Psoas muscle (tissue), 8 donors: ENCODE measurements at regions of chr11 and their contacts with region 1.

Region 1: DNA sequence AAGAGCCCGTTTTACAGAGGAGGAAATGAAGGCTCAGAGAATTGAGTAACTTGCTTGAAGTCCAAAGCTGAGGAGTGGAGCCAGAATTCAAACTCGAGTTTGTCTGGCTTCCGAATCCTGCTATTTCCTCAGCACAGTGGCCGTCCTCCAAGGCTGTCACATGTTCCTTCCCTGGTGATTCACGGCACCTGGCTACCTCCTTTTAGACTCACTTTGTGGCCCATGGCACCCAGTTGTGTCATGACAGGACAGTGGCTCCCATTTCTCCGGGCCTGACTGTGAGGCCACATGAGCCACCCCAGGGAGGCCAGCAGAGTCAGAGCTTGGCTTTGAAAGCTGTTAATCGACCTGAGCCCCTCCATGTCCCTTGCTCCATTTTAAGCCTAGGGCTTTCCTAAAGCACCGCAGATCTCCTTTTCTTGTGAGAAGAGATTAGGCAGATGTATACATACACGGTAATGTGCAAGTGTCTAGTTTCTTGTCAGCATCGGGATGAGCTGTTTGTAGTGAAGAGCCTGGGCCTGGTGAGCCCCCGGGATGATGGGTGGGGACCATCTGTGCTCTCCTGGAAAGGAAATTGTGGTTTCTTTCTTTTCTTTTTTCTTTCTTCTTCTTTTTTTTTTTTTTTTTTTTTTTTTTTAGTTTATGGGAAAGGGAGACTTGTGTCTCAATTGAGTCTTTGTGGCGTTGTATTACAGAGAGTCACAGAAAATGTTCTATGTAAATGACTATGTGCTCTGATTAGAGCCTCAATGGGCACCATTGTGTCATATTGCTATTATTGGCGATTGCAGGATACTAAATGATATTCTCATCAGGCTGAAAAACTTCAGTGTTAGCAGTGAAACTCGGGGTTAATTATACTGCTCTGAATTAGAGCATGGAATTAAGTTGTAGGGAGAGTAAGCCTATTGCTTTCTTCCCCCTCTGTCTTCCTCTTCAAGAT is 54.8 kb downstream of the PTPRJ start:
- DNase-seq: peak; percentile 87 to 92
- ATAC-seq: peak; percentile 87 to 92 (median 92)
- H3K4me3 ChIP-seq: no peak overlapping the region
- H3K27ac ChIP-seq: peak overlapping the region; percentile 89
- H3K4me1 ChIP-seq: peaks cover 40% of the 10 kb centered on the region
- H3K27me3 ChIP-seq: no peaks in the 10 kb centered on the region
- CTCF ChIP-seq: no peak

Region 2: GRCh38 chr11:47967577-47968425 is 67.4 kb before region 1 on chr11:
- intact Hi-C with region 1: no loop called
- DNase-seq: no peak
- ATAC-seq: no peak
- H3K4me3 ChIP-seq: no peak overlapping the region
- H3K27ac ChIP-seq: no peak overlapping the region
- H3K4me1 ChIP-seq: no peaks in the 10 kb centered on the region
- H3K27me3 ChIP-seq: no peaks in the 10 kb centered on the region
- CTCF ChIP-seq: no peak

Region 3: DNA sequence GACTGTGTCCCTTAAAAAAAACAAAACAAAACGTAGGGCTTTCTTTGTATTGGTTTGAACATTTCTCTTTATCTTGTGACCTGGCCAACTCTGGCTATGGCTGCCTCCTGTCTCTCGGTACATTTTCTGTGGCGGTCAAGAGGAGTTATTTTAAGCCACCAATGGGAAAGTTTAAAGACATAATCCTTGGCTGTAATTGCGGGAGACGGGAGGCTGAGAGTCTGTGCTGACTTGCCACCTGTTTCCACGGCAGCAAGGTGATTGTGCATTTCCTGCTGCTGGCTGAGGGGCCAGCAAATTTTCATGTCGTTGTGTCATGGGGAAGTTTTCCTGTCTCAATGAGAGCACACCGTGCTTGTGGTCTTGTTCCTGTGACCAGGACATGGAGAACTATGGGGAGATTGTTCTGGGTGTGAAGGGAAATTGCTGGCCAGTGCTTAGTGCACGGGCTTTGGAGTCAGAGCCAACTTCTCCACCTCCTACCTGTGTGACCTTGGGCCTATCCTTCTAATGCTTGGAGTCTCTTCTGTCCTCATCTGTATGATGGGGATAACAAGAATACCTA is 43.9 kb before region 1 on chr11:
- intact Hi-C with region 1: loop called in 1 of 2 experiments (anchors 5 kb)
- DNase-seq: peak; percentile 28 to 69
- ATAC-seq: peak; percentile 80 to 89 (median 86)
- H3K4me3 ChIP-seq: peak overlapping the region; percentile 42
- H3K27ac ChIP-seq: peak overlapping the region; percentile 78
- H3K4me1 ChIP-seq: peaks cover 13% of the 10 kb centered on the region
- H3K27me3 ChIP-seq: no peaks in the 10 kb centered on the region
- CTCF ChIP-seq: no peak

Region 4: DNA sequence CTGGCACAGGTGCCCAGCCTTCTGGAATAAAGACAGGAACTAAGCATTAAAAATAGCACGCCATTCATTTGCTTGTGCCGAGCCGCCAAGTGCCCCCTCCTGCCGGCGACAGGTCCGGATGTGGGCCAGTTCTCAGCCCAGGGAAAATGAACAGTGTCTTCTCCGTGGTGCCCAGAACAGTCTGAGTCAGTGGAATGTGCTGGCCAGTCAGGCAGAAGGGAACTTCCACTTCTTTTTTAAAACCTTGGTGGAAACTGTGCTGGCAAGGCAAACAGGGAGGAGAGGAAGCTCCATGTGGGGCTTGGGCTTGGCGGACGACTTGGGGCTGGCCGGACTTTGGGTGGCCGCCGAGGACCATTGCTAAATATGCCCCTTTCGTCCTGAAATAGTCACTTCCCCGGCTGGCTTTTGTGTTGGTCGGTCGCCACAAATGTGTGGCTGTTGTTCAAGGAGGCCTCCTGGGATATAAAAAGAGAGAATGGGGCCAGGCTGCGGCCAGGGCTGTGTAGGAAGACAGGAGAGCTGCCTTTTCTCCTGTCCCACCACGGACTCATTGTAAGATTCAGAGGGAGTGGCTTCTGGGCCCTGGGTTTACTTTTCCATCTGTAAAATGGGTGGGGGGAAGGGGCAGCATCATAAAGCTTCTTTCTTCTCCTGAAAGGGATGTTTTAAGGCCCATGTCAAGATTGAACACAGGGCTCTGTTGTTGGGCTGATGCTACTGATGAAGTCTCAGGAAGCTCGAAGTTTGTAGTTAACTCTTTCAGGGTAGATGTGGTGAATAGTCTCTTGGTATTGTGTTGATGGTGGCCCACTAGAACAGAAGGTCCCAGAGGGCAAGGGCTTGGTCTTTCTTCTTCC is 46.2 kb after region 1 on chr11:
- intact Hi-C with region 1: loop called (anchors 5 to 10 kb)
- DNase-seq: peak; percentile 86 to 92
- ATAC-seq: peak; percentile 96 to 98 (median 97)
- H3K4me3 ChIP-seq: peak overlapping the region; percentile 48
- H3K27ac ChIP-seq: peak overlapping the region; percentile 90
- H3K4me1 ChIP-seq: peaks cover 23% of the 10 kb centered on the region
- H3K27me3 ChIP-seq: no peaks in the 10 kb centered on the region
- CTCF ChIP-seq: no peak